Cardiac septum (tissue), 1 donor: ENCODE measurements at regions of chr3 and their contacts with region 1.

Region 1: GRCh38 chr3:157572559-157573270 is 69.5 kb upstream of the VEPH1 start:
- DNase-seq: no peak

Region 2: GRCh38 chr3:157532529-157533297 is 40.0 kb before region 1 on chr3:
- intact Hi-C with region 1: loop called (anchors 2 kb)
- DNase-seq: no peak